WTC11 (cell line): ENCODE measurements at regions of chr17 and their contacts with region 1.

Region 1: DNA sequence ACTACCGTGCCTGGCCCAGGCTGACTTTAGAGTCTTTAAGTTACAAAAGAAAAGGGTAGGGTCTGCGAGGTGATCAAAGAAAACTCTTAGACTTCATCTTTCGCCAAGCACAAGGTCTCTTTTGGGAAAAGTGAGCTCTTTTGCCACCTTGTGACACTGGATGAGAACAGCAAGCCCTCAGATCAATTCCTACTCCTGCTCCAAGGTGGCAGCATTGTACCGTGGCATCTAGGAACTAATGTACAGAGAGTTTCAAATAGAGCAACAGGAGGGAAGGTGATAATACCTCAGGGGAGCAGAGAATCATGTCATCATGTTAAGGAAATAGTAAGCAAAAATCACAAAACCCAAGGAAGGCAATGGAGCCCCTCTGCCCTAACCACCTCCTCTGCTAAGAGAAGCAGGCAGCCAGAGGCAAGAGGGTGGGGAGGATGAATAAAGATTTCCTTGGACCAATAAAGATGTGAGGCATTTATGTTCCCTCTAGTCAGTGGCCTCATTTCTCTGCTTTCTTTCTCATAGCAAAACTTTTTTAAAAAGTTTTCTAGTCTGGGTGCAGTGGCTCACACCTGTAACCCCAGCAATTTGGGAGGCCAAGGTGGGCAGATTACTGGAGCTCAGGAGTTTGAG is 2.1 kb upstream of the C17orf78 start:
- DNase-seq: peak; percentile 74
- ATAC-seq: peak; percentile 98
- H3K4me3 Mint-ChIP-seq: no peak overlapping the region
- H3K27ac Mint-ChIP-seq: 0 out of 2 replicates have a peak overlapping the region, but pooled peaks have one; percentile 2
- H3K4me1 Mint-ChIP-seq: 0 out of 2 replicates have a peak, but pooled peaks cover 3% of the 10 kb centered on the region
- H3K27me3 Mint-ChIP-seq: no peaks in the 10 kb centered on the region
- CTCF ChIP-seq: peak; percentile 71

Region 2: DNA sequence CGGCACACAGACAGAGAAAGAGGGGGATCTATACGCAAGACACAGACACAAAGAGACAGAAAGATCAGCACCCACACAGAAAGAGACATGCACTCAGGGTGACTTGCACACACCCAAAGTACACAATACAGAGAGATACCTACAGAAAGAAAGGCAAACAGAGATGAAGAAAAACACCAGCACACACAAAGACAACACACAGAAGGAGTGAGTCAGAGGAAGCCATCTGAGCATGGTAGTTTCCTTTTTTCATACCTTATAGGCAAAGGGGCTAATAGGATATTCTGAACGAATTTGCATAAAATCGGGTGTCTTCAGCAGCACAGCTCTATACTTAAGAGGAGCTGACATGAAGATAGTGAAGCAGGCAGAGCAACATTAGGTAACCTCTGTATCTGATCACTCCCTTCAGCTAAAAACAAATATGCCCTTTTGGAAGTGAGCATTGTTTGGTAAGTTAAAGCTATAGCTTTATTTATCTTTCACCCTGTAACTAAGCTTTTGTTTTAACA is 226.3 kb before region 1 on chr17:
- CTCF ChIA-PET with region 1: no interaction called
- POLR2A ChIA-PET with region 1: no interaction called
- DNase-seq: no peak
- ATAC-seq: no peak
- H3K4me3 Mint-ChIP-seq: no peak overlapping the region
- H3K27ac Mint-ChIP-seq: peak overlapping the region; percentile 50
- H3K4me1 Mint-ChIP-seq: peaks cover 9% of the 10 kb centered on the region
- H3K27me3 Mint-ChIP-seq: no peaks in the 10 kb centered on the region
- CTCF ChIP-seq: no peak

Region 3: GRCh38 chr17:37255432-37255831 is 118.2 kb before region 1 on chr17:
- CTCF ChIA-PET with region 1: interaction called, 10 read pairs
- POLR2A ChIA-PET with region 1: no interaction called
- DNase-seq: no peak
- ATAC-seq: no peak
- H3K4me3 Mint-ChIP-seq: no peak overlapping the region
- H3K27ac Mint-ChIP-seq: no peak overlapping the region
- H3K4me1 Mint-ChIP-seq: no peaks in the 10 kb centered on the region
- H3K27me3 Mint-ChIP-seq: no peaks in the 10 kb centered on the region
- CTCF ChIP-seq: no peak

Region 4: DNA sequence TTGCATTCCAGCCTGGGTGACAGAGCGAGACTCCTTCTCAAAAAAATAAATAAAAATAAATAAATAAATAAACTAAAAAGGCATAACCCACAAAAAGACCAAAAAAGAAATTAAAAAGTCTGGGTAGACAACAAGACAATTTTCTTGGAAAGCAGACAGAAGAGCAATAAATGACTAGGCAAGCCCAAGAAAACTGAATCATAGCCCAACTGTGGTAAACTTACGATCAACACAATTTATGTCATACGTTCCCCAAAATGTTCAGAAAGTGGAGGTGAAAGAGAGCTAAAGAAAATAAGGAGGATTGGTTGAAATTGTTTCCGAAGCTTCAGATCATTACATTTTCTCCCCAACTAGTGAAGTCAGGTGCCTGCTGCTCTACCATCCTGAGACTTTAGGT is 29.1 kb before region 1 on chr17:
- CTCF ChIA-PET with region 1: interaction called, 10 read pairs
- POLR2A ChIA-PET with region 1: no interaction called
- DNase-seq: no peak
- ATAC-seq: no peak
- H3K4me3 Mint-ChIP-seq: no peak overlapping the region
- H3K27ac Mint-ChIP-seq: no peak overlapping the region
- H3K4me1 Mint-ChIP-seq: no peaks in the 10 kb centered on the region
- H3K27me3 Mint-ChIP-seq: no peaks in the 10 kb centered on the region
- CTCF ChIP-seq: no peak

Region 5: DNA sequence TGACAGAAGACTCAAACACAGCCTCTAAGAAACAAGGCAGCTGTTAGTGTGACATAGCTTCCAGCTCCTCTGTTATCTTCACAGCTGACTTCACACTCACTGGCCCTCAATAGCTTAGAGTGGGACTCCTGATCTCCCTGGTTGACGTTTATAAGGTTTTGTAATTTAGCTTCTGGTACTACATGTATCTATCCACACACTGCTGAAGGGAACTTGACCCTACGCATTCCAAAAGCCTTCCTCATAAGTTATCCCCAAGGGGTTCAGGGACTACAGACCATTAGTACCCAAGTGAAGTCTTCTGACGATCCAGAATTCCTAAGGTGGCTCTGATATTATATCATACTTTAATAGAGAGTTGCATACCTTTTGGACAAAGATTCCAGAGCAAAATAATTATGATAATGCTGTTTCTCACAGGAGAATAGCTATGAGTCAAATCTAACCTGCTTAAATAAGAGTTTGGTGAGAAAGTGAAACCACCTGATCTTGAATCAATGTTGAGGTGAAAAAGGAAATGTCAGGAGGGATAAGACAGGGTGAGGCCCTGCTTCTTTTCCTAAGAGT is 18.5 kb after region 1 on chr17:
- CTCF ChIA-PET with region 1: interaction called, 68 read pairs
- POLR2A ChIA-PET with region 1: interaction called, 4 read pairs
- DNase-seq: no peak
- ATAC-seq: no peak
- H3K4me3 Mint-ChIP-seq: no peak overlapping the region
- H3K27ac Mint-ChIP-seq: no peak overlapping the region
- H3K4me1 Mint-ChIP-seq: no peaks in the 10 kb centered on the region
- H3K27me3 Mint-ChIP-seq: no peaks in the 10 kb centered on the region
- CTCF ChIP-seq: no peak

Region 6: GRCh38 chr17:37570527-37571093 is 197.0 kb after region 1 on chr17:
- CTCF ChIA-PET with region 1: interaction called, 11 read pairs
- POLR2A ChIA-PET with region 1: no interaction called
- DNase-seq: peak; percentile 75
- ATAC-seq: peak; percentile 99
- H3K4me3 Mint-ChIP-seq: no peak overlapping the region
- H3K27ac Mint-ChIP-seq: peak overlapping the region; percentile 76; the same call in 1 of the 2 replicates
- H3K4me1 Mint-ChIP-seq: no peaks in the 10 kb centered on the region
- H3K27me3 Mint-ChIP-seq: no peaks in the 10 kb centered on the region
- CTCF ChIP-seq: peak; percentile 44; the same call in 1 of the 2 replicates